A549 (cell line): ENCODE measurements at regions of chr2 and their contacts with region 1.

Region 1: GRCh38 chr2:191501561-191502168 is 176.3 kb upstream of the NABP1 start:
- DNase-seq: peak; percentile 33 to 64
- ATAC-seq: peak; percentile 52 to 71; a peak in 3 of 6 replicates
- H3K4me3 ChIP-seq: no peak overlapping the region
- H3K27ac ChIP-seq: peak overlapping the region; percentile 37 to 83
- H3K4me1 ChIP-seq: peaks cover 32% of the 10 kb centered on the region
- CTCF ChIP-seq: peak; percentile 79
- EP300 ChIP-seq: no peak
- POLR2A ChIP-seq: no peak
- RAD21 ChIP-seq: peak; percentile 87 to 88

Region 2: GRCh38 chr2:191158193-191158592 is 343.5 kb before region 1 on chr2:
- CTCF ChIA-PET with region 1: interaction called, 172 read pairs
- POLR2A ChIA-PET with region 1: no interaction called
- DNase-seq: no peak
- ATAC-seq: no peak
- H3K4me3 ChIP-seq: no peak overlapping the region
- H3K27ac ChIP-seq: 0 out of 6 replicates have a peak overlapping the region, but pooled peaks of 1 of the 2 experiments have one; percentile 29
- H3K4me1 ChIP-seq: peaks cover 19% of the 10 kb centered on the region; the same call in 2 of the 3 replicates
- CTCF ChIP-seq: no peak
- EP300 ChIP-seq: no peak
- POLR2A ChIP-seq: no peak
- RAD21 ChIP-seq: no peak

Region 3: DNA sequence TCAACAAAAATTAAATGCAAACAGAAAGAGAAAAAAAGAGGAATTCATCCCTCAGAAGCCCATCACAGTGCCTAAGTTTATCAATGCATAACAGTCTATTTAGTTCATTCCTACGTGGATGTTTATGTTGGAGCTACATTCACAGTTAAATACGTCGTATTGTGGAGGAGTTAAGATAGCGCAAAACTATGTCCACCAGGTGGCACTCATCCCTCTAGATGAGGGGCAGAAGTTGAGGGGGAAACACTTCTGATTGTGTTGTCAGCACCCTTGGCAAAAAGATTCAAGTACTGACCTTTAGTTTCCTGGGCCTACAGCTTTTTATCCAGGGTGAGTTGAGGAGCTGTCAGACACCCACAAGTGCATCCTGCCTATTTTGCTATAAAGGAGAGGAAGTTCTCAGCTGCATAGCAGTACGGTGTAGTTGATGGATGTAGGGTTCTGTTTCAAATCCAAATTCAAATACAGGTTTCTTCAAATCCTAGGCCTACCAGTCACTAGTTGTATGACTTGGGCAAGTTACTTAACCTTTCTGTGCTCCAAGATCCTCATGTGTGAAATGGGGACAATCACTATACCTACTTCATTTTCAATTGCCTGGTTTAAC is 283.3 kb before region 1 on chr2:
- CTCF ChIA-PET with region 1: interaction called, 32 read pairs
- POLR2A ChIA-PET with region 1: no interaction called
- DNase-seq: peak; percentile 46 to 97
- ATAC-seq: peak; percentile 81 to 87
- H3K4me3 ChIP-seq: no peak overlapping the region
- H3K27ac ChIP-seq: peak overlapping the region; percentile 93 to 95
- H3K4me1 ChIP-seq: peaks cover 56% of the 10 kb centered on the region
- CTCF ChIP-seq: peak; percentile 88
- EP300 ChIP-seq: no peak
- POLR2A ChIP-seq: no peak
- RAD21 ChIP-seq: peak; percentile 88 to 92

Region 4: DNA sequence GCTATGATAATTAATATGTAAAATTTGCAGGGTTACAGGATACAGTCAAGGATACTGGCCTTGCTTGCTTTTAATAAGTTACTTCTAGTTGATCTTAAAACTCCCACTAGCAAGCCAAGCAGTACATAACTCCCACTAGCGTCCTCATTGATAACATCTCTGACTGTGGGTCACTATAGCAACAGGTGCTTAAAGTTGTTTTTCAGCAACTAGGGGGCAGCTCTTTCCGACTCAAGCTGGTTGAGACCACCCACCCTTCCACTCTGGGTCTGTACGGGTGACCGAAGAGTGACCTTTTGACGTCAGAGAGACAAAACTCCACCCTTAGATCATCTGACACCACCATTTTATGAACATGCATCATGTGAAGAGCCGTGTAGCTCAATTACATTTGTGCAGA is 47.9 kb before region 1 on chr2:
- CTCF ChIA-PET with region 1: interaction called, 10 read pairs
- POLR2A ChIA-PET with region 1: no interaction called
- DNase-seq: no peak
- ATAC-seq: no peak
- H3K4me3 ChIP-seq: no peak overlapping the region
- H3K27ac ChIP-seq: no peak overlapping the region
- H3K4me1 ChIP-seq: no peaks in the 10 kb centered on the region
- CTCF ChIP-seq: no peak
- EP300 ChIP-seq: no peak
- POLR2A ChIP-seq: no peak
- RAD21 ChIP-seq: no peak

Region 5: GRCh38 chr2:191512216-191512835 is 10.7 kb after region 1 on chr2:
- CTCF ChIA-PET with region 1: interaction called, 55 read pairs
- POLR2A ChIA-PET with region 1: no interaction called
- DNase-seq: no peak
- ATAC-seq: no peak
- H3K4me3 ChIP-seq: no peak overlapping the region
- H3K27ac ChIP-seq: peak overlapping the region; percentile 12 to 50; a peak in 4 of 6 replicates
- H3K4me1 ChIP-seq: peaks cover 47% of the 10 kb centered on the region
- CTCF ChIP-seq: no peak
- EP300 ChIP-seq: no peak
- POLR2A ChIP-seq: no peak
- RAD21 ChIP-seq: no peak

Region 6: DNA sequence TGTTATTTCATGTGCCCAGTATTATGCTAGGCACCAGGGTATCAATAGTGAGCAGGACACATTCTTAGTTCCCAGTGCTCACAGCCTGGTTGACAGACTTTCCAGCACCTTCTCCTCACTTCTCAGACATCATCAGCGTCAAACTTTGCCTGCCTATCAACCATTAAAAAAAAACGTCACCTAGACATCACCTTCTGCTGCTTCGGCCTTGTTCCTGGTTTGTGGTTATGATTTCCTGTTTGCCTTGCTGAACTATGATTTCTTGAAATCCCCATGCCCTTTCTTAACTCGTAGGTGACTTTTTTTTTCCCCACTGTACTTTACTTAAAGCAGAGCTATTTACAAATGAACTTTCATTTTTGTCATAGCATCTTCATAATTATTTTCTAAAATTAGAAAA is 115.9 kb after region 1 on chr2:
- CTCF ChIA-PET with region 1: no interaction called
- POLR2A ChIA-PET with region 1: no interaction called
- DNase-seq: no peak
- ATAC-seq: no peak
- H3K4me3 ChIP-seq: no peak overlapping the region
- H3K27ac ChIP-seq: no peak overlapping the region
- H3K4me1 ChIP-seq: peaks cover 11% of the 10 kb centered on the region; the same call in 2 of the 3 replicates
- CTCF ChIP-seq: no peak
- EP300 ChIP-seq: no peak
- POLR2A ChIP-seq: no peak
- RAD21 ChIP-seq: no peak

Region 7: DNA sequence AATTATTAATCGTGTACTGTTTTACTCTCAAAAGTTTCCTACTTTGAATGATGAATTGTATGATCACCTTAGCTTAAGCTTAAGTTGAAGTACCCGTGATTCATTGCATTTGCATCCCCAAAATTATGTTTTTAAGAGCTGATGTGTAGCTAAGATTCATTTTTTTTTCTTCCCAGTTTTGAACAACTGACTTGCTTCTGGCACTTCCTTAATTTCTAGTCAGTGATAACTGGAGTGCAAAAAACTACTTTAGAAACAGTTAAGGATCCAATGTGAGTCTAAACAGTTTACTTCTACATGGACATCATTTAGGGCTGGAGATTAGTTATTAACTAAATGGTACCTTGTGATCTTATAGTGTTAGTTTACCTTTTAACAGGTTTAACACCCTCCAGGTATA is 469.2 kb after region 1 on chr2:
- CTCF ChIA-PET with region 1: no interaction called
- POLR2A ChIA-PET with region 1: no interaction called
- DNase-seq: no peak
- ATAC-seq: no peak
- H3K4me3 ChIP-seq: no peak overlapping the region
- H3K27ac ChIP-seq: no peak overlapping the region
- H3K4me1 ChIP-seq: no peaks in the 10 kb centered on the region
- CTCF ChIP-seq: no peak
- EP300 ChIP-seq: no peak
- POLR2A ChIP-seq: no peak
- RAD21 ChIP-seq: no peak